Left ventricle myocardium inferior (tissue), 1 donor: ENCODE measurements at regions of chr11 and their contacts with region 1.

Region 1: GRCh38 chr11:18105802-18106574 is at the start of gene SAAL1:
- DNase-seq: peak; percentile 87
- H3K4me3 ChIP-seq: peak within 1 kb of the TSS; percentile 87
- H3K27ac ChIP-seq: peak within 1 kb of the TSS; percentile 76
- H3K4me1 ChIP-seq: peaks cover 25% of the 10 kb centered on the region
- H3K27me3 ChIP-seq: peaks cover 25% of the 10 kb centered on the region
- CTCF ChIP-seq: peak; percentile 70
- total RNA-seq, gene SAAL1: 6.8 TPM

Region 2: DNA sequence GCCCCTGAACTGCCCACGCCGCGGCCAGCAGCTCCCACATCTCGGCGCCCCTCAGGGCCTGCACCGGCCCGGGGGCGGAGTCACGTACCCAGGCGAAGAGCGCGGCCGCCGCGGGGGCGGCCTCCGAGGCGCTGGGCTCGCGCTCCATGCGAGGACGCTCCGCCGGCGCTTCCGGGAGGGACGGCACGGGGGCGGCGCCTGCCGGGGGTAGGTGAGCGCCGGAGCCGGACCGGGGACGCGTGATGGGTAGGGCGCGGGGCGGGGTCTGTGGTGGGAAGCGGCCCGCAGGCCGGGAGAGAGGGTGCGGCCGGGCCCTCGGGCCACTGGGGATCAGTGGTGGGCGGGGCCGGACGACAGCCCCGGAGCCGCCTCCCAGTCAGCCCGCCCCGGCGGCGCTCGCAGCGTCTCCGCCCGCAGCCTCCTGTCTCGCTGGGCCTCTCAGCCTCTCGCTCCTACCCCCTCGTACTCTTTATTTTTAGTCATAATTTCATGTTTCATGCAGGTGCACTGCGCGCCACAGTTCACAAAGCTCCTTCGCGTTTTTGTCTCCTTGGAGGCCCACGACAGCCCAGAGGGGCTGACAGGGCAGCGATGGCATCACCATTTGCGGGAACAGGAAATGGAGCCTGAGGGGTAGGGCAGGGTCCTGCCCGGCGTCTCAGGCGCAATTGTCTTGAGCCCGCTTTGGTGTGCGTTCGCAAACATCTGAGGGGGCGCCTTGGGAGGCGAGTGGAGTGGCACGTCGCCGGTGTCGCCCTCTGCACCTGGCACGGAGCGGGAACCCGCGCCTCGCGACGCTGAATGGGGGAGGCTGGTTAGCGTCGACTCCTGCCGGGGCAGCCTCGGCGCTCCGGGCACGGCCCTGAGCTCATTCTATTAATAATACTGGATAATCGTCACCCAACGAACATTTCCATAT is 92.9 kb before region 1 on chr11 and contains the start of gene SERGEF:
- intact Hi-C with region 1: loop called (anchors 10 kb)
- DNase-seq: peak; percentile 94
- H3K4me3 ChIP-seq: peak within 1 kb of the TSS; percentile 97
- H3K27ac ChIP-seq: peak within 1 kb of the TSS; percentile 88
- H3K4me1 ChIP-seq: peaks cover 22% of the 10 kb centered on the region
- H3K27me3 ChIP-seq: no peaks in the 10 kb centered on the region
- CTCF ChIP-seq: peak; percentile 58
- total RNA-seq, gene SERGEF: 13.1 TPM

Region 3: DNA sequence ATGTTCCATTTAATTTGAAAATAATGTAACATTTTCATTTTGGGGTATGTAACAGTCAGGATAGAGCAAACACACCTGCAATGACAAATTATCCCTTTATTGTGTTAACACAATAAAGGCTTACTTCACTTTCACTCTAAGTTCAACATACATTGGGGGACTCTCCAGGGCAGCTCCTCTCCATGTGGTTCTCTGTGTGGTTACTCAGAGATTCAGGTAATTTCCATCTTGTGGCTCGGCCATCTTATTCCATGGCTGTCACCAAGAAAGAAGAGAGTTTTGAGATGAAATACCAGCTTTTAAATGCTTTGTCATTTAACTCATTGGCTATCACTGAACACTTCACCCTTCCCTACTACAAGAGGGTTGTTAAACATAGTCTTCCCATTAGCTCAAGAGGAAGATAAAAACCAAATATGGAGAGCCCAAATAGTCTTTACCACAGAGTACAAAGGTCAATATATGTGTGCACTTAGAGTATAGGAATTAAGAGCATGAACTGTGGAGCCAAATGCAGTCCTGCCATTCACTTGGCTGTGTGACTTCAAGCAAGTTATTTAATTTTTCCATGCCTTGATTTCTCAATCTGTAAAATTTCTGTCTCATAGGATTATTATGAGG is 49.3 kb before region 1 on chr11:
- intact Hi-C with region 1: no loop called
- DNase-seq: no peak
- H3K4me3 ChIP-seq: no peak overlapping the region
- H3K27ac ChIP-seq: no peak overlapping the region
- H3K4me1 ChIP-seq: no peaks in the 10 kb centered on the region
- H3K27me3 ChIP-seq: no peaks in the 10 kb centered on the region
- CTCF ChIP-seq: no peak